ENCODE measurements at regions of chr1 and their contacts with region 1.

Region 1: GRCh38 chr1:167442124-167442848 is 76.0 kb downstream of the CD247 start:
- DNase-seq: peak; percentile 59 to 96 (median 84)
- ATAC-seq: peak; percentile 98
- H3K4me3 ChIP-seq: no peak overlapping the region
- H3K27ac ChIP-seq: no peak overlapping the region
- H3K4me1 ChIP-seq: peaks cover 6 to 25% of the 10 kb centered on the region in 2 donors
- H3K27me3 ChIP-seq: peaks cover 0 to 22% of the 10 kb centered on the region in 2 donors
- CTCF ChIP-seq: peak; percentile 84 to 90

Region 2: DNA sequence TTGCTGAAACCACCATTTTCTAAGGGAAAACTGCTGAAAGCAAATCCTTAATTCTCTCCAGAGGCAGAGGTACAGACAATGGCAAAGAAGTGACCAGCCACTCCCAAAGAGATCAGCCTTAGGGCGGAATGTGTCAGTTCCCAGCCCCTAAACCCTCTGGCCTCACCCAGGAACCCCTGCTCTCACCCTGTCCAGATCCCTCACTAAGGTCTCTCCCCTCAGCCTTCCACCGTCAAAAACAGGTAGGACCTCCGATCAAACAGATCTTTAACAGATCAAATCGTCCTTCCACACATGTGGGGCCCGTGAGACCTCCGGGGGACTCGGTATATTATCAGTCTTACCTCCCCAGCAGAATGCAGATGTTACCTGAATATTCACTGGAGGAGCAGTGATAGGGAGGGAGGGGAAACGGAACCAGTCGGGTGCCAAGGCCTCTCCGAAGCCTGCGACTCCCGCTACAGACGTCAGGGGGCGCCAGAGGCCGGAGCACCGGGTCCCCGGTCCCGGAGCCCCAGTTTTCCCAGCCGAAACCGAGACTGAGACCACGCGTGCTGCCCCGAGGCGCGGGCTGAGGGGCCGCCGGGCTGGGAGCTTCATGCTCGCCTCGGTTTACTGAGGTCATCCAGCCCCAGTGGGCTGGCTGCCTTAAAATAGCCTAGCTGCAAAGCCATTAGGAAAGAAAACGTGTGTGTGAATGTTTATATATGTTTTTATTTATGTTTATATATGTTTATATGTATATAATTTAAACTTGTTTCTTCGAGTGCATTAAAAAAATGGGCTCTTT is 375.8 kb before region 1 on chr1:
- intact Hi-C with region 1: loop called in 1 of 2 experiments (anchors 10 kb)
- DNase-seq: peak; percentile 69 to 95 (median 77)
- ATAC-seq: peak; percentile 99
- H3K4me3 ChIP-seq: peak overlapping the region in 1 of 2 donors; percentile 11
- H3K27ac ChIP-seq: no peak overlapping the region
- H3K4me1 ChIP-seq: peaks cover 3 to 7% of the 10 kb centered on the region in 2 donors
- H3K27me3 ChIP-seq: no peaks in the 10 kb centered on the region
- CTCF ChIP-seq: peak; percentile 94 to 99

Region 3: DNA sequence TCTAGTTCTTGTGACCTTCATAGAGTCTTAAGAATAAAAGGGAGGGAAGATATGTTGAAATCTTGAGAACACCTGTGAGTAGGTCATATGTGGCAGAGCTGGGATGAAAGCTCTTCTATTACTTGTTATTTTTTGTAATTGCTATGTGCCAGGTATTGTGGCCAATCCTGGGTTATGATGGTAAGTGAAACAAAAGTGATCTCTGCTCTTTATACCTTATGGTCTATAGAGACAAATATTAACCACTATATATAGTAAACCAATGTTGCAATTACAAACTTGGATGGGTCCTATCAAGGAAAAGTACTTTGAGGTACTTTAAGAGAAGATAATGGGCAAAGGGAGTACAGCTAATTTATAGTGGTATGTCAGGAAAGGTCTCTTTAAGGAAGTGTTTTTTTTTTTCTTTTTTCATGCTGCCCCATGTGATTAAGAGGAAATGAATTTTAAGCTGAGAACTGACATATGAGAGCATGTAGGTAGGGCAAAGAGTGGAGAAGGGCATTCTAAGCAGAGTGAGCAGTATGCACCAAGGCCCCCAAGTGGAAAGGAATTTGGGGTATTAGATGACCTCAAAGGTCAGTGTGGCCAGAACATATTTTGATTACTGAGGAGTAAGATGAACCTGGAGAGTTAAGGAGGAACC is 178.3 kb before region 1 on chr1:
- intact Hi-C with region 1: loop called in 1 of 2 experiments (anchors 5 kb)
- DNase-seq: no peak
- ATAC-seq: peak; percentile 66
- H3K4me3 ChIP-seq: no peak overlapping the region
- H3K27ac ChIP-seq: peak overlapping the region in 1 of 2 donors; percentile 39
- H3K4me1 ChIP-seq: peaks cover 4 to 44% of the 10 kb centered on the region in 2 donors
- H3K27me3 ChIP-seq: no peaks in the 10 kb centered on the region
- CTCF ChIP-seq: no peak